ENCODE measurements at regions of chr6 and their contacts with region 1.

Region 1: GRCh38 chr6:33585403-33586107 is 5.5 kb upstream of the BAK1 start:
- DNase-seq: peak; percentile 80 to 89
- H3K4me3 ChIP-seq: no peak overlapping the region
- H3K4me3 Mint-ChIP-seq: peak overlapping the region; percentile 42
- H3K27ac Mint-ChIP-seq: no peak overlapping the region
- H3K4me1 ChIP-seq: peaks cover 17% of the 10 kb centered on the region
- H3K4me1 Mint-ChIP-seq: peaks cover 3% of the 10 kb centered on the region
- H3K27me3 ChIP-seq: no peaks in the 10 kb centered on the region
- H3K27me3 Mint-ChIP-seq: no peaks in the 10 kb centered on the region
- CTCF ChIP-seq: peak; percentile 96 to 98

Region 2: GRCh38 chr6:32234934-32235333 is 1350.6 kb before region 1 on chr6:
- CTCF ChIA-PET with region 1: no interaction called
- POLR2A ChIA-PET with region 1: no interaction called
- intact Hi-C with region 1: no loop called
- DNase-seq: peak in 1 of 2 experiments; percentile 32
- H3K4me3 ChIP-seq: no peak overlapping the region
- H3K4me3 Mint-ChIP-seq: no peak overlapping the region
- H3K27ac Mint-ChIP-seq: no peak overlapping the region
- H3K4me1 ChIP-seq: no peaks in the 10 kb centered on the region
- H3K4me1 Mint-ChIP-seq: peaks cover 7% of the 10 kb centered on the region
- H3K27me3 ChIP-seq: no peaks in the 10 kb centered on the region
- H3K27me3 Mint-ChIP-seq: no peaks in the 10 kb centered on the region
- CTCF ChIP-seq: peak in 1 of 2 experiments; percentile 19

Region 3: GRCh38 chr6:33299237-33299944 is 286.2 kb before region 1 on chr6:
- CTCF ChIA-PET with region 1: no interaction called
- POLR2A ChIA-PET with region 1: no interaction called
- intact Hi-C with region 1: no loop called
- DNase-seq: peak; percentile 89 to 91
- H3K4me3 ChIP-seq: peak overlapping the region; percentile 90
- H3K4me3 Mint-ChIP-seq: peak overlapping the region; percentile 95
- H3K27ac Mint-ChIP-seq: peak overlapping the region; percentile 98
- H3K4me1 ChIP-seq: peaks cover 13% of the 10 kb centered on the region
- H3K4me1 Mint-ChIP-seq: peaks cover 13% of the 10 kb centered on the region
- H3K27me3 ChIP-seq: no peaks in the 10 kb centered on the region
- H3K27me3 Mint-ChIP-seq: no peaks in the 10 kb centered on the region
- CTCF ChIP-seq: peak; percentile 65 to 80

Region 4: DNA sequence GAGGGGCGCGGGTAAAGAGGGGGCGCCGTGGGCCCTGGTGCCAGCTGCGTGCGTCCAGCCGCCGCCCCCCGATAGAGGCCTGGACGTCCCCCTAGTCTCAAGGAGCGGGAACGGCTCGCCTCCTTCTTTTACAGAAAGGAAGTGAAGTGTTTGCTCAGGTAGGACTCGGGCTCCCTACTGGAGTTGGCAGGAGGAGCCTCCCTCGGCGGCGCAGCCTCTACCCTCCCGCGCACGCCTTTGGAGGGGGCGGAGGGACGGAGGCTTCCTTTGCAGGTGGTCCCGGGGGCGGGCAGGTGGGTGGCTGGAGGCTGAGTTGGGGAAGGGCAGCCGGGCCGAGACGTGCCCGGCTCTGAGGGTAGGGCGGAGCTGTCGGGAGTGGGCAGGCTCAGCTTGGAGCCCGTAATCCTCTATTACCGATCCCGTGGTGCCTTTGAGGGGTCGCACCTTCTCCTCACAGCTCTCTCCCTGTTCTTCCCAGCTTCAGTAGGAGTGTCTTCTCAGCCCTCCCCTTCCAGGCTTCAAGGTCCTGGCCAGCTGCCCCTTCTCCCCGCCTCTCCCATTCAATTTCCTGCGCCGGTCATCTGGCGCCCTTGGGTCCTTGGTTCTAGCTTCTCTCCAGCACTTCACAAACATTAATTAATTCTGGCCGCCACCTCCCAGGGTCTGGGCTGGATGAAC is 36.3 kb after region 1 on chr6:
- CTCF ChIA-PET with region 1: interaction called, 3 read pairs
- POLR2A ChIA-PET with region 1: no interaction called
- intact Hi-C with region 1: loop called (anchors 2 kb)
- DNase-seq: peak in 1 of 2 experiments; percentile 40
- H3K4me3 ChIP-seq: peak overlapping the region; percentile 94
- H3K4me3 Mint-ChIP-seq: peak overlapping the region; percentile 86
- H3K27ac Mint-ChIP-seq: peak overlapping the region; percentile 68
- H3K4me1 ChIP-seq: peaks cover 37% of the 10 kb centered on the region
- H3K4me1 Mint-ChIP-seq: peaks cover 24% of the 10 kb centered on the region
- H3K27me3 ChIP-seq: no peaks in the 10 kb centered on the region
- H3K27me3 Mint-ChIP-seq: no peaks in the 10 kb centered on the region
- CTCF ChIP-seq: no peak

Region 5: DNA sequence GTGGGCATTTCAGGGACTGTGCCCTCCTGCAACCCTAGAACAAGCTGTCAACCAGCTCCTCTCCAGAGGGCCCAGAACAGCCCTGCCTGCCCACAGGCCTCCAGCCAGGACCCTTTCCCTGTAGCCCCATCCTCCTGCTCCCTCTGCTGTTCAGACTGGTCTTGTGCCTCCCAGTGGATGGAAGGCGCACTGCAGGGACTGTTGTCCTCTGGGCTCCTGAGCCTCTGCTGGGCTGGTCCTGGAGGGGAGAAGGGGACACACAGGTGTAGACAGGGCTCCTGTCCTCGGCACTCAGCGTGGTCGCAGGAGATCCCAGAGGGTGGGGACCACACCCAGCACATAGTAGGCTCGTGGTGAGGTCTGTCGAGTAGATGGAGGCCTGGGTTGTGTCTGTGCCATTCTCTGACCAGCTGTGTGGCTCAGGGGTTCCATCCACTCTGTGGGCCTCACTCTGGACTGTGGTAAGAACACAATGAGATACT is 47.0 kb after region 1 on chr6:
- CTCF ChIA-PET with region 1: interaction called, 10 read pairs
- POLR2A ChIA-PET with region 1: no interaction called
- intact Hi-C with region 1: loop called (anchors 1 kb)
- DNase-seq: peak; percentile 80 to 82
- H3K4me3 ChIP-seq: no peak overlapping the region; the same call in 1 of the 2 replicates
- H3K4me3 Mint-ChIP-seq: peak overlapping the region; percentile 97
- H3K27ac Mint-ChIP-seq: peak overlapping the region; percentile 61
- H3K4me1 ChIP-seq: peaks cover 64% of the 10 kb centered on the region
- H3K4me1 Mint-ChIP-seq: peaks cover 59% of the 10 kb centered on the region
- H3K27me3 ChIP-seq: no peaks in the 10 kb centered on the region
- H3K27me3 Mint-ChIP-seq: no peaks in the 10 kb centered on the region
- CTCF ChIP-seq: peak; percentile 69 to 96

Region 6: GRCh38 chr6:33654831-33655554 is 69.4 kb after region 1 on chr6:
- CTCF ChIA-PET with region 1: no interaction called
- POLR2A ChIA-PET with region 1: no interaction called
- intact Hi-C with region 1: no loop called
- DNase-seq: no peak
- H3K4me3 ChIP-seq: no peak overlapping the region
- H3K4me3 Mint-ChIP-seq: no peak overlapping the region
- H3K27ac Mint-ChIP-seq: no peak overlapping the region
- H3K4me1 ChIP-seq: no peaks in the 10 kb centered on the region
- H3K4me1 Mint-ChIP-seq: no peaks in the 10 kb centered on the region
- H3K27me3 ChIP-seq: no peaks in the 10 kb centered on the region
- H3K27me3 Mint-ChIP-seq: no peaks in the 10 kb centered on the region
- CTCF ChIP-seq: no peak

Region 7: DNA sequence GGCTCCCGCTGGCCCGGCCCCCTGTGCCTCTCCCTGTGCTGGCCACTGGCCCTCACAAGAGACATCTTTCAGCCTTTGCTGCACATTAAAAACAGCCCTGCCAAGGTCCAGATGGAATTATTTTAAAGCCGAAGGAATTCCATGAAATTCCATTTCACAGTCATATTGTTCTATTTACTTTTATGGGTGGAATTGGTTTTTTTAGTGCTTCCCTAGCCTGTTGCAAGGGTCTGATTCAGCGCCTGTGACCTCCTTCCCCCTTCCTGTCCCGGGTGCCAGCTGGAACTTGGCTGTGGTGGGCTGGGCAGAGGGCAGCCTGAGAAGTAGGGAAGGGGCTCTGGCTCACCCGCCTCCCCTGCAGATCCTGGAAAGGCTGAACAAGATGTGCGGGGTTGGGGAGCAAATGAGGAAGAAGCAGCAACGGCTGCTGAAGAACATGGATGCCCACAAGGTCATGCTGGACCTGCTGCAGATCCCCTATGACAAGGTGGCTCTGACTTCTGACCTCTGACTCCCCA is 91.6 kb after region 1 on chr6:
- CTCF ChIA-PET with region 1: no interaction called
- POLR2A ChIA-PET with region 1: no interaction called
- intact Hi-C with region 1: no loop called
- DNase-seq: no peak
- H3K4me3 ChIP-seq: no peak overlapping the region
- H3K4me3 Mint-ChIP-seq: no peak overlapping the region
- H3K27ac Mint-ChIP-seq: no peak overlapping the region
- H3K4me1 ChIP-seq: no peaks in the 10 kb centered on the region
- H3K4me1 Mint-ChIP-seq: no peaks in the 10 kb centered on the region
- H3K27me3 ChIP-seq: no peaks in the 10 kb centered on the region
- H3K27me3 Mint-ChIP-seq: no peaks in the 10 kb centered on the region
- CTCF ChIP-seq: no peak

Region 8: DNA sequence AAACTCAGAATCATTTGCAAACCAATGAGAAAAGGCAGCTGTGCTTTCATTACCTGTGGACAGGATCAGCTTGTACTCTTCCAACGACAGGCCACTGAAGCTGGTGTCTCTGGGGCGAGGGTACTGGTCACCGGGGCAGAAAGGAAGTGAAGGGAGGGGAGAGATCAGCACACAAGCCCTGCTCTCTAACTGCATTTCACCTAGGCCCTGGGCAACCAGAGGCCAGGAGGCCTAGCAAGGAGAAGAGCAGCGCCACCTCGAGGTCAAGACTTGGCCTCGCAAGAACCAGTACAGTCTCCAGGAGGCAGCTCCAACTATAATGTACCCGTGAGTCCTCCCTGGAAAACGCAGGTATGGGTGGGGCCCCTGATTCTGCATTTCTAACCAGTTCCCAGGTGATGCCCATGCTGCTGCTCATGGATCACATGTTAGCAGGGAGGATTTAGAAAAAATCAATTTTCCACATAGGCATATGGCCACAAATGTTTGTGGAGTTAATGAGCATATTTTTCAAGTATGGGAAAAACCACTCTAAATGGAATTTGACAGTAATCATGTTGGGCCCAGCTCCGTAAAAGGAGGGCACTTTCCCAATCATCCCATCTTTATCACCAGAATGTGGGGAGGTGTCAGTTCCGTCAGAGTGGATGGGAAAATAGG is 115.0 kb after region 1 on chr6:
- CTCF ChIA-PET with region 1: interaction called, 10 read pairs
- POLR2A ChIA-PET with region 1: no interaction called
- intact Hi-C with region 1: loop called (anchors 1 kb)
- DNase-seq: peak; percentile 74 to 77
- H3K4me3 ChIP-seq: no peak overlapping the region
- H3K4me3 Mint-ChIP-seq: no peak overlapping the region
- H3K27ac Mint-ChIP-seq: no peak overlapping the region
- H3K4me1 ChIP-seq: no peaks in the 10 kb centered on the region
- H3K4me1 Mint-ChIP-seq: no peaks in the 10 kb centered on the region
- H3K27me3 ChIP-seq: no peaks in the 10 kb centered on the region
- H3K27me3 Mint-ChIP-seq: no peaks in the 10 kb centered on the region
- CTCF ChIP-seq: peak; percentile 64 to 85

Region 9: GRCh38 chr6:33761922-33762629 is 176.5 kb after region 1 on chr6:
- CTCF ChIA-PET with region 1: no interaction called
- POLR2A ChIA-PET with region 1: no interaction called
- intact Hi-C with region 1: loop called (anchors 2 kb)
- DNase-seq: peak; percentile 90 to 92
- H3K4me3 ChIP-seq: no peak overlapping the region
- H3K4me3 Mint-ChIP-seq: no peak overlapping the region
- H3K27ac Mint-ChIP-seq: no peak overlapping the region
- H3K4me1 ChIP-seq: peaks cover 7% of the 10 kb centered on the region; the same call in 1 of the 2 replicates
- H3K4me1 Mint-ChIP-seq: peaks cover 10% of the 10 kb centered on the region
- H3K27me3 ChIP-seq: no peaks in the 10 kb centered on the region
- H3K27me3 Mint-ChIP-seq: no peaks in the 10 kb centered on the region
- CTCF ChIP-seq: peak; percentile 80 to 92